ENCODE measurements at regions of chr18 and their contacts with region 1.

Region 1: GRCh38 chr18:62979009-62979575 is 263.8 kb downstream of the PHLPP1 start:
- DNase-seq: no peak
- H3K4me3 ChIP-seq: no peak overlapping the region
- H3K27ac ChIP-seq: no peak overlapping the region
- H3K4me1 ChIP-seq: no peaks in the 10 kb centered on the region
- H3K27me3 ChIP-seq: no peaks in the 10 kb centered on the region
- CTCF ChIP-seq: no peak
- POLR2A ChIP-seq: no peak

Region 2: GRCh38 chr18:62596145-62597005 is 382.7 kb before region 1 on chr18:
- intact Hi-C with region 1: loop called (anchors 10 kb)
- DNase-seq: no peak
- H3K4me3 ChIP-seq: peak overlapping the region; percentile 22 to 40
- H3K27ac ChIP-seq: no peak overlapping the region
- H3K4me1 ChIP-seq: no peaks in the 10 kb centered on the region
- H3K27me3 ChIP-seq: no peaks in the 10 kb centered on the region
- CTCF ChIP-seq: no peak
- POLR2A ChIP-seq: no peak

Region 3: GRCh38 chr18:62714671-62715435 is 264.2 kb before region 1 on chr18:
- intact Hi-C with region 1: loop called (anchors 10 kb)
- DNase-seq: peak; percentile 99
- H3K4me3 ChIP-seq: peak overlapping the region; percentile 67 to 81
- H3K27ac ChIP-seq: peak overlapping the region; percentile 92 to 99
- H3K4me1 ChIP-seq: no peaks in the 10 kb centered on the region
- H3K27me3 ChIP-seq: no peaks in the 10 kb centered on the region
- CTCF ChIP-seq: peak; percentile 52 to 81 (median 73)
- POLR2A ChIP-seq: peak; percentile 9